ENCODE measurements at regions of chr4 and their contacts with region 1.

Region 1: DNA sequence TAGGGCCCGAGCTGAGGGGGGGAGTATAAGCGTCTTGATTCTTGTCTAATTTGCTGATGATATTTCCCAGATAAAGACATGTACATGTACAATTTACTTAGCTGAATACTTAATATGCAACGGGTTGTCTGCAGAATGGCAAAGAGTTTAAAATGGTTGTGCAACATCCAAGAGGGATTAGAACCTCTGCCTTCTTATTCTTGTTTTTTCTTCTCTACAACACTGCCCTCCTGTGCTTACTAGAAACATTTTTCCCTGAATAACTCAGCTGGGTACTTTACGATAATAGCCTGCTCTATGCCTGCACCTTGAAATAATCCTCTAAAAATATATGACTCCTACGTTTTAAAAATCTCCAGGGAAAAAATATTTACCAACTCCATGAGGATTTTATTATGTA is 41.8 kb downstream of the INTS12 start:
- DNase-seq: peak; percentile 27

Region 2: DNA sequence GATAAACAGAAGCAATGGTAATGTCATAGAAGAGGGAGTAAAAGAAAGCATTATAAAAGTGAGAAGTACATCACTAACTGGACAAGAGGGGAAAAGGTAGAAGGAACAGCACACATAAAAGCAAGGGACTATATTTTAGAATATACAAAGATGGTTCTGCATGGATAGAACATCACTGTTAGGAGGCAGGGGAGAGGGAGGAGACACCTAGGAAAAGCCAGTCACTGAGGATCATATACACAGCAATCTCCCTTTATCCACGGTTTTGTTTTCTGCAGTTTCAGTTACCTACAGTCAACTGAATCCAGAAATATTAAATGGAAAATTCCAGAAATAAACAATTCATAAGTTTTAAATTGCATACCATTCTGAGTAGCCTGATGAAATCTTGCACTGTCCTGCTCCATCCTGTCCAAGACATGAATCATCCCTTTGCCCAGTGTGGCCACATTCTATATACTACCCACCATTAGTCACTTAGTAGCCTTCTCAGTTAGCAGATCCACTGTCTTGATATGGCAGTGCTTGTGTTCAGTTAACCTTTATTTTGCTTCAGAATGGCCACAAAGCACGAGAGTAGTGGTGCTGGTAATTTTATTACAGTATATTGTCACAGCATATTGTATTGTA is 267.0 kb before region 1 on chr4:
- CTCF ChIA-PET with region 1: no interaction called
- POLR2A ChIA-PET with region 1: no interaction called
- DNase-seq: no peak

Region 3: GRCh38 chr4:105473324-105474098 is 193.2 kb before region 1 on chr4 and contains the start of gene PPA2:
- CTCF ChIA-PET with region 1: no interaction called
- POLR2A ChIA-PET with region 1: interaction called, 13 read pairs
- DNase-seq: peak; percentile 68

Region 4: GRCh38 chr4:105520817-105521790 is 145.6 kb before region 1 on chr4:
- CTCF ChIA-PET with region 1: interaction called, 16 read pairs
- POLR2A ChIA-PET with region 1: no interaction called
- DNase-seq: peak; percentile 50

Region 5: GRCh38 chr4:105631818-105632400 is 34.8 kb before region 1 on chr4:
- CTCF ChIA-PET with region 1: interaction called, 10 read pairs
- POLR2A ChIA-PET with region 1: no interaction called
- DNase-seq: no peak